Dendritic cell treated with granulocyte-macrophage colony-stimulating factor and Interleukin-4, amounts not matched to agents 40 ng/mL and 50 ng/mL, for 4 days (primary cell): ENCODE measurements at regions of chr1 and their contacts with region 1.

Region 1: GRCh38 chr1:202348509-202349205 is at the start of gene PPP1R12B:
- H3K4me3 Mint-ChIP-seq: peak within 1 kb of the TSS; percentile 100
- H3K27ac Mint-ChIP-seq: peak within 1 kb of the TSS; percentile 95
- H3K4me1 Mint-ChIP-seq: peaks cover 40% of the 10 kb centered on the region
- H3K27me3 Mint-ChIP-seq: no peaks in the 10 kb centered on the region

Region 2: GRCh38 chr1:202615501-202616354 is 267.1 kb after region 1 on chr1:
- intact Hi-C with region 1: loop called (anchors 10 kb)
- H3K4me3 Mint-ChIP-seq: peak overlapping the region; percentile 39
- H3K27ac Mint-ChIP-seq: no peak overlapping the region
- H3K4me1 Mint-ChIP-seq: peaks cover 45% of the 10 kb centered on the region
- H3K27me3 Mint-ChIP-seq: no peaks in the 10 kb centered on the region

Region 3: DNA sequence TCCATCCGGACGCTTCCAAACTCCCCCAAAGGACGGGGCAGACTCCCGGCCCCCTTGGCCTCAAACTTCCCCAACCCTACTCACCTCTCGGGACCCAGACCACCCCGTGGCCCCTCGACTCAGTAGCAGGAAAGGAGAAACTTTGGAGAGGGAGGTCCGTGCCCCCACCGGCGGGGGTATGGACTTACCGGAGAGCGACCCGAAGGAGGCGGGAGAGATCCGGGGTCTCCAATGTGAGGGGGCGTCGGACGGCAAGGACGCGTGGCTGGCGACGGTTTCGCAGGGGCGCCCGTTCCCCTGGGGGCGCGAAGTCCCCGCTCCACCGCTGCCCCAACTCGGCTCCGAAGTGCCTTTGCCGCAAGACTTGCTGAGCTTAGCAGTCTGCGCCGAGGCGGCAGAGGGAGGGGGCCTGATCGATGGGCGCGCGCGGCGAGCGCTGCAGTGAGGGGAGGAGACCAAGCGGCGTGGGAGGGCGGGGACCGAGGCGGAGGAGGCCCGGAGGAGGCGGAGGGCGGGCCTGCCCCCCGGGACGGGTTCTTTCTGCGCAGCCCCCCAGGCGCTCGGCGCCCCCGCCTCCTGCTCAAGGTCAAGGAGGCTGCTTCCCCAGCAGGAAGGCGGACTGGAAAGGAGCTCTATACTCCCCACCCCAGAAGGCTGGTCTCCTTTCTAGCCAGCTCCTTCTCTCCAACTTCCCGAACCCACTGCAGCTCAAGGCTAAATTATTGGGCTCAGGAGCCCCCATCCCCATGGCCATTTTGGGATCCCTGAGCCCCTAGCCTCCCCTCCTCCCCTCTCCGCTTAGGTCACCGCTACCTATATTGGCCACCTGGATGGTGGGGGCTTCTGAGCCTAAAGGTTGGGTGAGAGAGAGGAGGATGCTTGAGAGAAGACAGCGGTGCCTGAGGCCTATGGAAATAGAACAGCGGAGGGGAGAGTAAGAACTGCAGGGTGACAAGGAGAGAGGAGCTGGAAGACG is 361.7 kb after region 1 on chr1 and contains the start of gene SYT2:
- intact Hi-C with region 1: loop called (anchors 10 kb)
- H3K4me3 Mint-ChIP-seq: no peak within 1 kb of the TSS
- H3K27ac Mint-ChIP-seq: no peak within 1 kb of the TSS
- H3K4me1 Mint-ChIP-seq: no peaks in the 10 kb centered on the region
- H3K27me3 Mint-ChIP-seq: peaks cover 93% of the 10 kb centered on the region